CD8-positive, alpha-beta memory T cell (primary cell): ENCODE measurements at regions of chr1 and their contacts with region 1.

Region 1: DNA sequence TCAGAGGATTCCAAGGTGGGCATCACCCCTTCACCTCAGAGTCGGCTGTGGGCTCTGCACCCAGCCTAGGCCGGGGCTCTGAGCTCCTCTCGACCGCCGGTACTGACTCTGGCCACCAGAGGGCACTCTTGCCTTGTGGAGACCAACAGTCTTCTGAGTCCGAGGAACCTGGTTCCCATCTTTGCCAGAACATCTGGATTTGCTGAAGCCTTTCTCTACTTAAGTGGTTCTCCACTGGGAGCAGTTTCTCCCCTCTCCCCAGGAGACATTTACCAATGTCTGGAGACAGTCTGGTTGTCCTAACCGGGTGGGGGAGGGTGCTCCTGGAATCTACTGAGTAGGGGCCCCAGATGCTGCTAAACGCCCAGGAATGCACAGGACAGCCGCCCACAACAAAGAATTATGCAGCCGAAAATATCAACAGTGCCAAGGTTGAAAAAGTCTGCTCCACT is 9.4 kb downstream of the ETV3L start:
- DNase-seq: peak; percentile 64 to 89 (median 80)
- H3K4me3 ChIP-seq: no peak overlapping the region
- H3K4me3 Mint-ChIP-seq: no peak overlapping the region
- H3K27ac ChIP-seq: no peak overlapping the region
- H3K27ac Mint-ChIP-seq: peak overlapping the region in 1 of 8 donors; percentile 19
- H3K4me1 ChIP-seq: peaks cover 3% of the 10 kb centered on the region
- H3K4me1 Mint-ChIP-seq: peaks cover 0 to 5% (median 4%) of the 10 kb centered on the region in 3 donors
- H3K27me3 ChIP-seq: no peaks in the 10 kb centered on the region
- H3K27me3 Mint-ChIP-seq: peaks cover 3% of the 10 kb centered on the region in 2 donors

Region 2: GRCh38 chr1:156601122-156601830 is 488.9 kb before region 1 on chr1 and contains the start of gene GPATCH4:
- CTCF ChIA-PET with region 1: no interaction called
- POLR2A ChIA-PET with region 1: no interaction called
- DNase-seq: peak; percentile 58 to 81 (median 70)
- H3K4me3 ChIP-seq: peak within 1 kb of the TSS; percentile 97
- H3K4me3 Mint-ChIP-seq: peak within 1 kb of the TSS; percentile 84 to 100 (median 95)
- H3K27ac ChIP-seq: peak within 1 kb of the TSS; percentile 68
- H3K27ac Mint-ChIP-seq: peak within 1 kb of the TSS; percentile 72 to 100 (median 98)
- H3K4me1 ChIP-seq: peaks cover 32% of the 10 kb centered on the region
- H3K4me1 Mint-ChIP-seq: peaks cover 34 to 36% (median 35%) of the 10 kb centered on the region in 3 donors
- H3K27me3 ChIP-seq: no peaks in the 10 kb centered on the region
- H3K27me3 Mint-ChIP-seq: no peaks in the 10 kb centered on the region
- total RNA-seq, gene GPATCH4: 123 to 131 TPM

Region 3: DNA sequence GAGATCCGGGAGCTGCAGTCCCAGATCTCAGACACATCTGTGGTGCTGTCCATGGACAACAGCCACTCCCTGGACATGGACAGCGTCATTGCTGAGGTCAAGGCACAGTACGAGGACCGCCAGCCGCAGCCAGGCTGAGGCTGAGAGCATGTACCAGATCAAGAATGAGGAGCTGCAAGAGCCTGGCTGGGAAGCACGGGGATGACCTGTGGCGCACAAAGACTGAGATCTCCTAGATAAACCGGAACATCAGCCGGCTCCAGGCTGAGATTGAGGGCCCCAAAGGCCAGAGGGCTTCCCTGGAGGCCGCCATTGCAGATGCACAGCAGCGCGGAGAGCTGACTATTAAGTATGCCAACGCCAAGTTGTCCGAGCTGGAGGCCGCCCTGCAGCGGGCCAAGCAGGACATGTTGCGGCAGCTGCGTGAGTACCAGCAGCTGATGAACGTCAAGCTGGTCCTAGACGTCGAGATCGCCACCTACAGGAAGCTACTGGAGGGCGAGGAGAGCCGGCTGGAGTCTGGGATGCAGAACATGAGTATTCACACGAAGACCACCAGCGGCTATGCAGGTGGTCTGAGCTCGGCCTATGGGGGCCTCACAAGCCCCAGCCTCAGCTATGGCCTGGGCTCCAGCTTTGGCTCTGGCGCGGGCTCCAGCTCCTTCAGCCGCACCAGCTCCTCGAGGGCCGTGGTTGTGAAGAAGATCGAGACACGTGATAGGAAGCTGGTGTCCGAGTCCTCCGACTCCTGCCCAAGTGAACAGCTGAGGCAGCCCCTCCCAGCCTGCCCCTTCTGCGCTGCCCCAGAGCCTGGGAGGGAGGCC is 16.1 kb before region 1 on chr1:
- CTCF ChIA-PET with region 1: interaction called, 11 read pairs
- POLR2A ChIA-PET with region 1: no interaction called
- DNase-seq: peak in 1 of 5 donors; percentile 19
- H3K4me3 ChIP-seq: no peak overlapping the region
- H3K4me3 Mint-ChIP-seq: no peak overlapping the region
- H3K27ac ChIP-seq: no peak overlapping the region
- H3K27ac Mint-ChIP-seq: no peak overlapping the region
- H3K4me1 ChIP-seq: no peaks in the 10 kb centered on the region
- H3K4me1 Mint-ChIP-seq: peaks cover 0 to 4% (median 0%) of the 10 kb centered on the region in 3 donors
- H3K27me3 ChIP-seq: no peaks in the 10 kb centered on the region
- H3K27me3 Mint-ChIP-seq: peaks cover 17 to 20% of the 10 kb centered on the region in 2 donors

Region 4: DNA sequence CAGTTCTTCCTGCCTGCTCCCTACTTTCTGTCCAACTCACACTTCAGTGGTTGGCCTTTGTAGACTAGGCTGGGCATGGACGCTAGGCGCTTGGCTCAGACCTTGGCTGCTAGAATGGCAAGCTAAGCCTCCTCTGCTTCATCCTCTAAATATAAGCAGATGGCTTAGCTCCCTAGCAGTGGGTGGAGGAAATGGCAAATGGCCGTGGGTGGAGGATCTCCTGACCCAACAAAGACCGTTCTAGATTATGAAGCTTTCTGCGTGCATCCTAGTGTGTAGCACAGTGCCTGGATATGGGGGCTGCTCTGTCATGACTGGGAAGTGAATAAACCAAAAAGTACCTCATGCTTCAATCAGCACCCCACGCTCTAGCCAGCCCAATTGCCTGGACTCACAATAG is 19.8 kb after region 1 on chr1:
- CTCF ChIA-PET with region 1: interaction called, 11 read pairs
- POLR2A ChIA-PET with region 1: no interaction called
- DNase-seq: no peak
- H3K4me3 ChIP-seq: no peak overlapping the region
- H3K4me3 Mint-ChIP-seq: no peak overlapping the region
- H3K27ac ChIP-seq: no peak overlapping the region
- H3K27ac Mint-ChIP-seq: no peak overlapping the region
- H3K4me1 ChIP-seq: no peaks in the 10 kb centered on the region
- H3K4me1 Mint-ChIP-seq: peaks cover 0 to 3% (median 0%) of the 10 kb centered on the region in 3 donors
- H3K27me3 ChIP-seq: no peaks in the 10 kb centered on the region
- H3K27me3 Mint-ChIP-seq: peaks cover 24 to 54% of the 10 kb centered on the region in 2 donors

Region 5: GRCh38 chr1:157133426-157133825 is 43.2 kb after region 1 on chr1:
- CTCF ChIA-PET with region 1: interaction called, 16 read pairs
- POLR2A ChIA-PET with region 1: no interaction called
- DNase-seq: peak in 2 of 5 donors; percentile 65 to 66
- H3K4me3 ChIP-seq: peak overlapping the region; percentile 0
- H3K4me3 Mint-ChIP-seq: peak overlapping the region; percentile 56 to 85 (median 66)
- H3K27ac ChIP-seq: no peak overlapping the region
- H3K27ac Mint-ChIP-seq: peak overlapping the region; percentile 2 to 99 (median 86)
- H3K4me1 ChIP-seq: peaks cover 64% of the 10 kb centered on the region
- H3K4me1 Mint-ChIP-seq: peaks cover 70 to 77% (median 74%) of the 10 kb centered on the region in 3 donors
- H3K27me3 ChIP-seq: no peaks in the 10 kb centered on the region
- H3K27me3 Mint-ChIP-seq: peaks cover 0 to 2% of the 10 kb centered on the region in 2 donors

Region 6: GRCh38 chr1:157138220-157139051 is 48.2 kb after region 1 on chr1 and contains the start of gene ETV3:
- CTCF ChIA-PET with region 1: interaction called, 16 read pairs
- POLR2A ChIA-PET with region 1: no interaction called
- DNase-seq: peak; percentile 86 to 91 (median 90)
- H3K4me3 ChIP-seq: peak within 1 kb of the TSS; percentile 88
- H3K4me3 Mint-ChIP-seq: peak within 1 kb of the TSS; percentile 85 to 98 (median 96)
- H3K27ac ChIP-seq: peak within 1 kb of the TSS; percentile 88
- H3K27ac Mint-ChIP-seq: peak within 1 kb of the TSS; percentile 95 to 100 (median 99)
- H3K4me1 ChIP-seq: peaks cover 49% of the 10 kb centered on the region
- H3K4me1 Mint-ChIP-seq: peaks cover 52 to 60% (median 55%) of the 10 kb centered on the region in 3 donors
- H3K27me3 ChIP-seq: no peaks in the 10 kb centered on the region
- H3K27me3 Mint-ChIP-seq: peaks cover 0 to 2% of the 10 kb centered on the region in 2 donors
- total RNA-seq, gene ETV3: 24.8 to 26.4 TPM

Region 7: DNA sequence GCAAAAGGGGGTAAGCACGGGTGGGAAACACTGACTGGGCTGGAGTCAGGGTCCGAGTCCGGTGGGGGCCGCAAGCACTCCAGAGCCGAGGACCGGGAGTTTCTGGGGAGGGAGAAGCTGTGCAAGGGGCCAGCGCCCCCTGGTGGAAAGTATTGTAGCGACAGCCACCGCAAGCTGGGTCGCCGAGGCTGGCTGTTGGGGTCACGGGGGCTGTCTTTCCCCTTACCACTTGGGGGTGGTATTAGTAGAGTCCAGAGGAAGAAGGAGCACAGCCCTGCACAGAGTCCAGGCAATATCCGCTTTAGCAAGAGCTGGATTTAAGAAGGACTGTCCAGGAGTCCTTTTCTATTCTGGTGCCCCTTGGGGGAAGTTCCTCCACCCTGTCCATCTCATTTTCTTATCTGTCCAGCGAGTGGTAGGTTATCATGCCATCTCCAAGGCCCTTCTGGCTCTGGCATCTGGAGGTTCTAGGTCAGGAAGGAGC is 65.9 kb after region 1 on chr1:
- CTCF ChIA-PET with region 1: interaction called, 306 read pairs
- POLR2A ChIA-PET with region 1: interaction called, 3 read pairs
- DNase-seq: peak; percentile 63 to 79 (median 70)
- H3K4me3 ChIP-seq: peak overlapping the region; percentile 12
- H3K4me3 Mint-ChIP-seq: peak overlapping the region in 5 of 7 donors; percentile 33 to 68 (median 56)
- H3K27ac ChIP-seq: no peak overlapping the region
- H3K27ac Mint-ChIP-seq: peak overlapping the region in 5 of 8 donors; percentile 1 to 87 (median 39)
- H3K4me1 ChIP-seq: peaks cover 23% of the 10 kb centered on the region
- H3K4me1 Mint-ChIP-seq: peaks cover 17 to 27% (median 24%) of the 10 kb centered on the region in 3 donors
- H3K27me3 ChIP-seq: peaks cover 8% of the 10 kb centered on the region
- H3K27me3 Mint-ChIP-seq: peaks cover 13 to 30% of the 10 kb centered on the region in 2 donors